ENCODE measurements at regions of chr4 and their contacts with region 1.

Region 1: DNA sequence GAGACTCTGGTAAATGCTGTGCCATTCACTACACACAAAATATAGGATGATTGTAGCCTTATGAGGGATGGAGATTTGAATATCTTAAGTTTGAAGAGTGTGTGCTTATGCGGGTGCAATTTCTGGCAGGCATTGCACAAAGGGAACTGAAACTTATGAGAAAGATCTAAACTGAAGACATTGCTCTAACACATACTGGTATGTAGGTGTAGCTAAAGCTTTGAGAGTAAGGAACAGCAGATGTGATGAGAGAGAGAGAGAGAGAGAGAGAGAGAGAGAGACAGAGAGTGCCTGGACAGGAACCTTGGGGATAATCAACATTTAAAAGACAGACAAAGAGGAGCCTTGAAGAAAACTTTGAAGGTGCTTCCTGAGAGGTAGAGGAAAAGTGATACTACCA is 379.7 kb downstream of the SPRY1 start:
- DNase-seq: no peak
- ATAC-seq: no peak
- H3K4me3 ChIP-seq: no peak overlapping the region
- H3K27ac ChIP-seq: no peak overlapping the region
- H3K4me1 ChIP-seq: no peaks in the 10 kb centered on the region
- H3K27me3 ChIP-seq: no peaks in the 10 kb centered on the region
- CTCF ChIP-seq: no peak
- POLR2A ChIP-seq: no peak

Region 2: GRCh38 chr4:124253080-124253479 is 476.8 kb after region 1 on chr4:
- intact Hi-C with region 1: loop called in 1 of 2 experiments (anchors 10 kb)
- DNase-seq: no peak
- ATAC-seq: no peak
- H3K4me3 ChIP-seq: no peak overlapping the region
- H3K27ac ChIP-seq: no peak overlapping the region
- H3K4me1 ChIP-seq: no peaks in the 10 kb centered on the region
- H3K27me3 ChIP-seq: no peaks in the 10 kb centered on the region
- CTCF ChIP-seq: no peak
- POLR2A ChIP-seq: no peak